ENCODE measurements at regions of chrX and their contacts with region 1.

Region 1: GRCh38 chrX:41198406-41198805 is 113.2 kb downstream of the USP9X start:
- DNase-seq: no peak
- H3K4me3 ChIP-seq: no peak overlapping the region
- H3K4me3 Mint-ChIP-seq: no peak overlapping the region
- H3K27ac ChIP-seq: no peak overlapping the region
- H3K27ac Mint-ChIP-seq: no peak overlapping the region
- H3K4me1 ChIP-seq: no peaks in the 10 kb centered on the region
- H3K4me1 Mint-ChIP-seq: peaks cover 0 to 3% (median 0%) of the 10 kb centered on the region in 3 donors
- H3K27me3 ChIP-seq: no peaks in the 10 kb centered on the region
- H3K27me3 Mint-ChIP-seq: no peaks in the 10 kb centered on the region

Region 2: DNA sequence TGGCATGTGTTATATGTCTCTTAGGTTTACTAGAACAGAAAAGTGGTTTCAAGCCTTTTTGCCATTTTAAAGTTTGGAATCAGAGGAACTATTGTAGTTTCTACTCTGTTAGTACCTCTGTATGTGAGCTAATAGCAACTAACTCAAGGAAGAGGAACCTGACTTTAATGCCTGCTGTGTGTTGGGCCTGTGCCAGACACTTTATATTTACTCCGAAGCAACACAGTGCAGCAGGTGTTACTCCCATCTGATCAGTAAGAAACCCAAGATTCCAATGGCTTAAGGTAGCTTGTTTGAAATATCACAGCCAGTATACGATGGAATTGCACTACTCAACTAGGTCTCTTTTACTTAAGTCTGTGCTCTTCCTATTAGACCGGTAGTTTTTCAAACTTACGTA is 34.0 kb before region 1 on chrX:
- CTCF ChIA-PET with region 1: no interaction called
- POLR2A ChIA-PET with region 1: no interaction called
- DNase-seq: no peak
- H3K4me3 ChIP-seq: no peak overlapping the region
- H3K4me3 Mint-ChIP-seq: no peak overlapping the region
- H3K27ac ChIP-seq: no peak overlapping the region
- H3K27ac Mint-ChIP-seq: no peak overlapping the region
- H3K4me1 ChIP-seq: no peaks in the 10 kb centered on the region
- H3K4me1 Mint-ChIP-seq: peaks cover 3 to 7% (median 4%) of the 10 kb centered on the region in 3 donors
- H3K27me3 ChIP-seq: no peaks in the 10 kb centered on the region
- H3K27me3 Mint-ChIP-seq: no peaks in the 10 kb centered on the region

Region 3: DNA sequence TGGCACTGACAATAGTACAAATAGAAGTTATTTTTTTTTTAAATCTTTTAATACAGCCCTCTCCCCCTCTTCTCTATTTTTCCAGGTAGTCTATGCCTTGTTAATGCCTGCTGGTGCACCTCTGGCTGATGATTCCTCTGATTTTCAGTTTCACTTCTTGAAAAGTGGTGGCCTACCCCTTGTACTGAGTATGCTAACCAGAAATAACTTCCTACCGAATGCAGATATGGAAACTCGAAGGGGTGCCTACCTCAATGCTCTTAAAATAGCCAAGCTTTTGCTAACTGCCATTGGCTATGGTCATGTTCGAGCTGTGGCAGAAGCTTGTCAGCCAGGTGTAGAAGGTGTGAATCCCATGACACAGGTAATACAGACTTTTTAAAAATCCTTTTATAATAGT is 14.1 kb before region 1 on chrX:
- CTCF ChIA-PET with region 1: no interaction called
- POLR2A ChIA-PET with region 1: no interaction called
- DNase-seq: no peak
- H3K4me3 ChIP-seq: no peak overlapping the region
- H3K4me3 Mint-ChIP-seq: no peak overlapping the region
- H3K27ac ChIP-seq: no peak overlapping the region
- H3K27ac Mint-ChIP-seq: no peak overlapping the region
- H3K4me1 ChIP-seq: peaks cover 8% of the 10 kb centered on the region
- H3K4me1 Mint-ChIP-seq: peaks cover 22 to 34% (median 24%) of the 10 kb centered on the region in 3 donors
- H3K27me3 ChIP-seq: no peaks in the 10 kb centered on the region
- H3K27me3 Mint-ChIP-seq: no peaks in the 10 kb centered on the region

Region 4: GRCh38 chrX:41293269-41293668 is 94.9 kb after region 1 on chrX:
- CTCF ChIA-PET with region 1: no interaction called
- POLR2A ChIA-PET with region 1: interaction called, 10 read pairs
- DNase-seq: no peak
- H3K4me3 ChIP-seq: no peak overlapping the region
- H3K4me3 Mint-ChIP-seq: no peak overlapping the region
- H3K27ac ChIP-seq: no peak overlapping the region
- H3K27ac Mint-ChIP-seq: no peak overlapping the region
- H3K4me1 ChIP-seq: no peaks in the 10 kb centered on the region
- H3K4me1 Mint-ChIP-seq: no peaks in the 10 kb centered on the region
- H3K27me3 ChIP-seq: no peaks in the 10 kb centered on the region
- H3K27me3 Mint-ChIP-seq: no peaks in the 10 kb centered on the region